IMR-90 (cell line): ENCODE measurements at regions of chr3 and their contacts with region 1.

Region 1: GRCh38 chr3:46725621-46726314 is 8.1 kb upstream of the PRSS50 start:
- DNase-seq: peak; percentile 9
- ATAC-seq: peak; percentile 65
- H3K4me3 ChIP-seq: no peak overlapping the region
- H3K27ac ChIP-seq: no peak overlapping the region
- H3K4me1 ChIP-seq: no peaks in the 10 kb centered on the region
- H3K27me3 ChIP-seq: peaks cover 9% of the 10 kb centered on the region
- CTCF ChIP-seq: no peak
- POLR2A ChIP-seq: no peak
- RAD21 ChIP-seq: no peak

Region 2: DNA sequence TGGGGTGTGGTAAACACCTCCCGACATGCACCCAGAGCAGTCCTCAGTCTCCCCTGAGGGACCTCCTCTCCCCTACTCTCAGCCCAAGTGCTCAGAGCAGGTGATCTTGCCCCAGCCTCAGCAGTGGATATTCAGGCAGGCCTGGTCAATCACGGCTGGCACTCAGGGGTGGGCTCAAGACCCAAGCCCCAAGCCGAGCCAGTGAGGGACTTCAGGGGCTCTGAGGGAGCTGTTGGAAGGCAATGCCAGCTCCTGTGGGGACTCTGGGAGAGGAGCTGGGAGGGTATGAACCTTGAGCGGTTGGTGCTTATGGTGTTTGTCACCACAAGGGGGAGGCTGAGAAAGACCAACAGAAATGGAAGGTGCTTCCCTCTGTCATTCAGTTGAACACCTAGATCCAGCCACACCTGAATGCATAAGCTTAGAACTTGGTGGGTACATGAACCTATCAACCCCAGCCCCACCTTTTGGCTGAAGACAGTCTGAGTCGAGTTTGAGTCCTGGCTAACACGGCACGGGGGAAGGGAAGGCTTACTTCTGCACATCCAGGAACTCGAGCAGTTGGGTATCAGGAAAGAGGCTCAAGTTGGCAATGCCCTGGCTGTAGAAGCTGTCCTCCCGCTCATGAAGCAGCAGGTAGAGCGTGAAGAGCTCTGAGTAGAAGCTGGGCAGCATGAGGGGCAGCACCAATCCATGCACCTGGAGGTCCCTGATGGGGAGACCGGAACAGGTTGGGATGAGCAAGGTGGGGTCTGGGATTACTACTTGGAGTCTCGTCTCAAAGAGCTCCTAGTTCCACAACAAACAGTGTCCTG is 51.5 kb before region 1 on chr3:
- CTCF ChIA-PET with region 1: no interaction called
- POLR2A ChIA-PET with region 1: no interaction called
- dilution Hi-C with region 1: no loop called
- in situ Hi-C with region 1: no loop called
- intact Hi-C with region 1: no loop called
- DNase-seq: no peak
- ATAC-seq: no peak
- H3K4me3 ChIP-seq: no peak overlapping the region
- H3K27ac ChIP-seq: no peak overlapping the region
- H3K4me1 ChIP-seq: peaks cover 2% of the 10 kb centered on the region; the same call in 1 of the 2 replicates
- H3K27me3 ChIP-seq: no peaks in the 10 kb centered on the region
- CTCF ChIP-seq: peak; percentile 13; the same call in 1 of the 2 replicates
- POLR2A ChIP-seq: no peak
- RAD21 ChIP-seq: no peak

Region 3: GRCh38 chr3:46829699-46830208 is 104.0 kb after region 1 on chr3:
- CTCF ChIA-PET with region 1: no interaction called
- POLR2A ChIA-PET with region 1: no interaction called
- dilution Hi-C with region 1: no loop called
- in situ Hi-C with region 1: no loop called
- intact Hi-C with region 1: loop called (anchors 5 kb)
- DNase-seq: no peak
- ATAC-seq: no peak
- H3K4me3 ChIP-seq: no peak overlapping the region
- H3K27ac ChIP-seq: no peak overlapping the region
- H3K4me1 ChIP-seq: no peaks in the 10 kb centered on the region
- H3K27me3 ChIP-seq: peaks cover 29% of the 10 kb centered on the region
- CTCF ChIP-seq: no peak
- POLR2A ChIP-seq: no peak
- RAD21 ChIP-seq: no peak

Region 4: DNA sequence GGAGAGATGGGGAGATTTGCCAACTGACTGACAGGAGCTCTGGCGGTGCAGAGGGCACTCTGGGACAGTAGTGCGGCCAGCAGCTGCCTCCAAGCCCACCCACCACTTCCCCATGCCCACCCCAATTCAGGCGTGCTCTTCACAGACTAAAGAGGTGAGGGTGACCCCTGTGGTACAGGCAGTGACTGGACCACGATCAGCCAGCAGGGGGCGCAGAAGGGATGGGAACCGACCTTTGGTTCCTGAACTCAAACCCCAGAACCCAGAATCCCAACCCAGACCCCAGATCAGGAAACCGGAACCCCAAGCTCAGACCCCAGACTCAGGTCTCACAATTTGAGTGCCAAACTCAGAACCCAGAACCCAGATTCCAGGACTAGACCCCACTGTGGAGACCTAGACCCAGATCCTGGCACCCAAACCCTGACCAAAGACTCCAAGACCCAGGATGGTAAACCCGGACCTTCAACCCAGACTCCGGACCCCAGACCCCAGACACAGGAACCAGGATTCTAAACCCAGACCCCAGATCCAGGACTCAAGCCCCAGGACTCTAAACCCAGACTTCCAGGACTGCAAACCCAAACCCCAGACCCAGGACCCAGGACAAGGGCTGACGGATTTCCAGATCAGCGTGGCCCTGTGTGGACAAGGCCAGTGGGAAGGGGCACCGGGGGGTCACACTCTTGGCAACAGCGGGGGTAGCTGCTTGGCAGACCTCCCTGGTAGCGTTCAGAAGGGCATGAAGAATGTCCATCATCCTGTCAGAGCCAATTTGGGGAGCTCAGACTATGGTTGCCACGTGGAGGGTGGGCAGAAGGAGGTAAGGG is 141.2 kb after region 1 on chr3:
- CTCF ChIA-PET with region 1: no interaction called
- POLR2A ChIA-PET with region 1: no interaction called
- dilution Hi-C with region 1: no loop called
- in situ Hi-C with region 1: no loop called
- intact Hi-C with region 1: no loop called
- DNase-seq: peak; percentile 21
- ATAC-seq: peak; percentile 68
- H3K4me3 ChIP-seq: no peak overlapping the region
- H3K27ac ChIP-seq: no peak overlapping the region
- H3K4me1 ChIP-seq: no peaks in the 10 kb centered on the region; the same call in 1 of the 2 replicates
- H3K27me3 ChIP-seq: peaks cover 48% of the 10 kb centered on the region
- CTCF ChIP-seq: peak; percentile 78
- POLR2A ChIP-seq: no peak
- RAD21 ChIP-seq: peak; percentile 69